GM12878 (cell line): ENCODE measurements at regions of chr9 and their contacts with region 1.

Region 1: DNA sequence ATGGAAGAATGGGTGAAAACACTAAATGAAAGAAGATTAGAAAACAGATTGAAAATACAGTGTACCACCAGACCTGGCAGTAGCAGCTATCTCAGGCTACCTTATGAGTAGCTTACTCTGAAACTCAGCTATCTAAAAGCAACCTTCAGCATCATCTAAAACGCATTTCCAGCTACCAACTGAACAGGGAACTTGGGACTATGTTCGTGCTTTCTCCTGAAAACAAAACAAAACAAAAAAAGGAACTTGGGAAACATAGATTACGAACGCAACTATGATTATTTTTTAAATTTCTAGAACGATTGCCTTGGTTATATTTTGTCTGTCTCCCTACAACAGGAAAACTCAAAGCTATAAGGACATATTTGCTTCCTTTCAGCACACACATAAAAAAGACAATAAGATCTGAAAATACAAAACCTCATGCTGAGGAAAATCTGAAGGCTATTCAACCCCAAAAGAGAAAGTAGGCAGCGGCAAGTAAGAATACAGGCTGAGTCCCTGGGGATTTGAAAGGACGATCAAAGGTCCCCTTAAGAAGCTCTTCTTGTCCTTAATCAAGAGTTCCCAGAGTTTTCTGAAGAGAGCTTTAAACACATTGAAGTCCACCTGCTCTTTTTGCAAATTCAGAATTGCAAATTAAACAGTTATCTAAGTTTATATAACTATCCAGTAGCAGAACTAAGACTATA is 53.4 kb downstream of the OR2K2 start:
- DNase-seq: no peak
- ATAC-seq: peak; percentile 67
- H3K4me3 ChIP-seq: no peak overlapping the region; the same call in 1 of the 2 replicates
- H3K27ac ChIP-seq: no peak overlapping the region
- H3K4me1 ChIP-seq: no peaks in the 10 kb centered on the region
- H3K27me3 ChIP-seq: no peaks in the 10 kb centered on the region
- CTCF ChIP-seq: no peak
- EP300 ChIP-seq: no peak
- POLR2A ChIP-seq: no peak
- RAD21 ChIP-seq: no peak

Region 2: GRCh38 chr9:111236332-111236731 is 40.2 kb before region 1 on chr9:
- CTCF ChIA-PET with region 1: interaction called, 5 read pairs
- POLR2A ChIA-PET with region 1: interaction called, 4 read pairs
- RAD21 ChIA-PET with region 1: interaction called, 3 read pairs
- SMC1A ChIA-PET with region 1: interaction called, 17 read pairs
- in situ Hi-C with region 1: no loop called
- intact Hi-C with region 1: no loop called
- DNase-seq: no peak
- ATAC-seq: no peak
- H3K4me3 ChIP-seq: no peak overlapping the region
- H3K27ac ChIP-seq: no peak overlapping the region
- H3K4me1 ChIP-seq: no peaks in the 10 kb centered on the region
- H3K27me3 ChIP-seq: no peaks in the 10 kb centered on the region
- CTCF ChIP-seq: no peak
- EP300 ChIP-seq: no peak
- POLR2A ChIP-seq: no peak
- RAD21 ChIP-seq: no peak

Region 3: DNA sequence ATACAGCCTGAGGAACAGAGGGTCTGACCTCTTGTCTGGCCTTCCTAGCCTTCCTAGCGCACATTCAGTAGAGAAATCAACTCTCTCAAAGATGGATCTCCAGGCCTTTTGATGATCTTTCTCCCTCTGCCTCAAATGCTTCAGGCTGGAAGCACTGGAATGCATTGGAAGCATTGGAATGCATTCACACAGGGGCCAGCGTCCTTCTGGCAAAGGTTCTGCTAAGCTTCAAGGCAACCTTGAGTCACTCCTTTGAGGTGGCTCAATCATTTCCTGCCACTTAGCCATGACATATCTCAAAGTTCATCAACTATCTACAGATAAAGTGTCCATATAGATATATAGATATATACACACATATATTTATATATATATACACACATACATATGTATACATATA is 10.6 kb after region 1 on chr9:
- CTCF ChIA-PET with region 1: no interaction called
- POLR2A ChIA-PET with region 1: interaction called, 3 read pairs
- RAD21 ChIA-PET with region 1: interaction called, 13 read pairs
- SMC1A ChIA-PET with region 1: interaction called, 19 read pairs
- in situ Hi-C with region 1: no loop called
- intact Hi-C with region 1: no loop called
- DNase-seq: no peak
- ATAC-seq: no peak
- H3K4me3 ChIP-seq: no peak overlapping the region
- H3K27ac ChIP-seq: no peak overlapping the region
- H3K4me1 ChIP-seq: no peaks in the 10 kb centered on the region
- H3K27me3 ChIP-seq: no peaks in the 10 kb centered on the region; a peak in 1 of 4 replicates
- CTCF ChIP-seq: no peak
- EP300 ChIP-seq: no peak
- POLR2A ChIP-seq: no peak
- RAD21 ChIP-seq: no peak